Heart left ventricle (tissue), 16 donors: ENCODE measurements at regions of chr12 and their contacts with region 1.

Region 1: DNA sequence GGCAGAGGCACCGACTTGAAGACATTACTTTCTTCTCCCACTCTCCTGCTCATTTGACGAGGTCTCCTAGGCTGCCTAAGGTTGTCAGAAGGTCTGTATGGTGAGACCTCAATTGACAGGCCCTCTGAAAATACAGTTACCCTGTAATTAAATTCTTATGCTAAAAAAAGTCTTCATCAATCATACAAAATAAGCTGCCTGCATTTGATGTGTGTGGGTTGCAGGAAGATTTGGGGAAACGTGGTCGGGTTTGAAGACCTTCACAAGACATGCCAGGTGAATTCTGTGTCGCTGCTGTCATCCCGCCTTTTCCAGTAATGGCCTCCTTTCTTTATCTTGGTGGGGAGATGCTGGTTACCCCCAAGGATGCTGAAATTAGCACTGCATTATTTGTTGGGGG is 299.4 kb downstream of the CACNA1C start:
- DNase-seq: no peak
- ATAC-seq: no peak
- H3K4me3 ChIP-seq: no peak overlapping the region
- H3K27ac ChIP-seq: no peak overlapping the region
- H3K4me1 ChIP-seq: peaks cover 5 to 78% (median 43%) of the 10 kb centered on the region in 12 donors
- H3K27me3 ChIP-seq: no peaks in the 10 kb centered on the region
- CTCF ChIP-seq: no peak
- POLR2A ChIP-seq: no peak

Region 2: DNA sequence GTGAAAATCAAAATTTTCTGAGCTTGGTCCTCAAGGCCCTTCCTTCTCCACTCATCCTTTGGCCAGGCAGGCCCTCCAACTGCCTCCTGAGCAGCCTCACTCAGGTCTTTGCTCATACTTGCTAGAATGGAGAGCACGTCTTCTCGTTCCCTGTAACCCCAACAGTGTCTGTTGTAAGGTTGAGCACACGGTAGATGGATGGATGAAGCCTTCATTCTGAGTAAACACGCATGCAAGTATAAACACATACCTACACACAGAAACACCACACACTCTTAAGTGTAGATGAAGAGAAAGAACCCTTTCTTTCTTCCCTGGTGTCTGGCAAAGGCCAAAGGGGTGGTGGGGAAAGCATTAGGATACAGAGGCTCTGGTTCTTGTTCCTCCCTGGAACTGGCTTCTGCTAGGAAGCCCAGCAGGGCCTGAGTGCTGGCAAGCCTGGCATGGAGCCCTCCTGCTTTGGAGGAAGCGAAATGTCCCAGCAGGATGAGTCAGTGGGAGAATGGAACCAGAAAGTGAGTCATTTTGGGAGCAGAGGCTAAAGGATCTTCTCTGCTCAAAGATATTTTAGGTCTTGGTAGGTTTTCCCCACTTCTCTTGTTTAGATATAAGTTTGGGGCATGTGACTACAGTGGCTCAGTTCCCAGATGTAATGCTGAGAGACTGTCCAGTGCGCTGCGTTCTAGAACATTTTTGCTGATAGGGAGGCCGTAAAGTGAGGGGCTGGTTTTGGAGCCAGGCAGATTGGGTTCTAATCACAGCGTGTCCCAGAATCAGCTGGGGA is 172.1 kb before region 1 on chr12:
- intact Hi-C with region 1: no loop called
- DNase-seq: peak; percentile 51 to 91 (median 81)
- ATAC-seq: peak; percentile 80 to 89 (median 88)
- H3K4me3 ChIP-seq: no peak overlapping the region
- H3K27ac ChIP-seq: peak overlapping the region; percentile 56 to 90 (median 78)
- H3K4me1 ChIP-seq: peaks cover 9 to 70% (median 46%) of the 10 kb centered on the region in 12 donors
- H3K27me3 ChIP-seq: no peaks in the 10 kb centered on the region
- CTCF ChIP-seq: no peak
- POLR2A ChIP-seq: no peak

Region 3: DNA sequence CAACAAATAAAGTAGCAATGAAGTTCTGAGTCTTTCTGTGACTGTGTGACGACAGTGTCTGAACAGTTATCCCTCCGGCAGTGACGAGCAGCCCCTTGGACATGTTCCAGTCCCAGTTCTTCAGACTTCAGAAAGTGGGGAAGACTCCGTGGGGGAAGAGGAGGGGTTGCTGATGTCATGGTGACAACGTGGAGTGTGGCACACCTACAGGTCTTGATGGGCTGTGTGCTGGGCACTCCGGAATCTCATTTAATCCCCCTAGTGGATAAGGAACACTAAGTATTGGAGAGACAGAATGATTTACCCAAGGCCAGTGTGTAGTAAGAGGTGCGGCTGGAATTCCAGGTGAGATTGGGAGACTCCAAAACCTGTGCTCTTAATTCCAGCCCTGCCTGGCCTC is 19.3 kb before region 1 on chr12:
- intact Hi-C with region 1: loop called in 1 of 10 experiments (anchors 1 kb)
- DNase-seq: no peak
- ATAC-seq: peak in 3 of 4 donors; percentile 8 to 22 (median 11)
- H3K4me3 ChIP-seq: no peak overlapping the region
- H3K27ac ChIP-seq: peak overlapping the region in 7 of 12 donors; percentile 23 to 91 (median 86)
- H3K4me1 ChIP-seq: peaks cover 5 to 85% (median 57%) of the 10 kb centered on the region in 12 donors
- H3K27me3 ChIP-seq: no peaks in the 10 kb centered on the region
- CTCF ChIP-seq: no peak
- POLR2A ChIP-seq: no peak